Mammary epithelial cell (primary cell): ENCODE measurements at regions of chr11 and their contacts with region 1.

Region 1: DNA sequence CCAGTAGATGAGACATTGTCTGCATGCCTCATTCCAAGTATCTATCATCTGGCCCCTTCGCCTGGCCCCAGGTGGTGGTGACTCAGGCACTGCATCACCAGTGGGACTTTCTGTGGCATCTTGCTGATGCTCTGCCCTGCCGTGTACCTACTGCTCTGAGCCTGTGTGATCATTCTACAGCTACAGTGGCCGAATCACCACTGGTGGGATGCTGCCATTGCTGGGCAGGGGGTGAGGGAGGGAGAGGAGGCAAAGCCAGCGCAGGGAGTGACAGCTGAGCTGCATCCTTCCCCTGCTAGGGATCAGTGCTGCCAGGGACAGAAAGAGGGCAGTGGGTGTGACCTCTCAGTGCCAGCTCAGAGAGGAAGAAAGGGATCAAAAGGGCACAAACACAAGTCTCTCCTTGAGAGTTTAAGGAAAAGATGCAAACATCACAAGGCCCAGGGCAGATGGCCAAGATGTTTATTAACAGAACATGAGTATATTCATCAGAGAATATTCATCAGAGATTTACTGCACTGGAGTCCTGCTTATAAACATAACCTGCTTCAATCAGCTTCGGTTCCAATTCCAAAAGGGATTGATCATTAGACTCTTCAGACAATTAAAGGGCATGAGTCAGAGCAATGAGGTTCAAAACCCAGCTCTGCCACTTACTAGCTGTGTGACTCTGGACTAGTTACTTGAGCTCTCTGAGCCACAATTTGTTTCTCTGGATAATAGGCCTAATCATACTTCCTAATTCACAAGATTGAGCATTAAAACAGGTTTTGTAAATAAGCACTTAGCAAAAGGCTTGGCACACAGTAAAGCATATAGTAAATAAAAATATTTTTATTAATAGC is 109.8 kb downstream of the NAT10 start:
- DNase-seq: peak; percentile 97
- H3K4me3 ChIP-seq: no peak overlapping the region
- H3K27ac ChIP-seq: peak overlapping the region; percentile 50
- H3K4me1 ChIP-seq: peaks cover 12% of the 10 kb centered on the region
- H3K27me3 ChIP-seq: no peaks in the 10 kb centered on the region
- CTCF ChIP-seq: no peak

Region 2: GRCh38 chr11:34192481-34193401 is 22.4 kb before region 1 on chr11:
- CTCF ChIA-PET with region 1: no interaction called
- dilution Hi-C with region 1: no loop called
- in situ Hi-C with region 1: no loop called
- intact Hi-C with region 1: loop called (anchors 2 kb)
- DNase-seq: peak; percentile 98
- H3K4me3 ChIP-seq: peak overlapping the region in 2 of 3 experiments; percentile 1 to 13
- H3K27ac ChIP-seq: peak overlapping the region; percentile 45
- H3K4me1 ChIP-seq: peaks cover 18% of the 10 kb centered on the region
- H3K27me3 ChIP-seq: no peaks in the 10 kb centered on the region
- CTCF ChIP-seq: no peak